ENCODE measurements at regions of chr12 and their contacts with region 1.

Region 1: DNA sequence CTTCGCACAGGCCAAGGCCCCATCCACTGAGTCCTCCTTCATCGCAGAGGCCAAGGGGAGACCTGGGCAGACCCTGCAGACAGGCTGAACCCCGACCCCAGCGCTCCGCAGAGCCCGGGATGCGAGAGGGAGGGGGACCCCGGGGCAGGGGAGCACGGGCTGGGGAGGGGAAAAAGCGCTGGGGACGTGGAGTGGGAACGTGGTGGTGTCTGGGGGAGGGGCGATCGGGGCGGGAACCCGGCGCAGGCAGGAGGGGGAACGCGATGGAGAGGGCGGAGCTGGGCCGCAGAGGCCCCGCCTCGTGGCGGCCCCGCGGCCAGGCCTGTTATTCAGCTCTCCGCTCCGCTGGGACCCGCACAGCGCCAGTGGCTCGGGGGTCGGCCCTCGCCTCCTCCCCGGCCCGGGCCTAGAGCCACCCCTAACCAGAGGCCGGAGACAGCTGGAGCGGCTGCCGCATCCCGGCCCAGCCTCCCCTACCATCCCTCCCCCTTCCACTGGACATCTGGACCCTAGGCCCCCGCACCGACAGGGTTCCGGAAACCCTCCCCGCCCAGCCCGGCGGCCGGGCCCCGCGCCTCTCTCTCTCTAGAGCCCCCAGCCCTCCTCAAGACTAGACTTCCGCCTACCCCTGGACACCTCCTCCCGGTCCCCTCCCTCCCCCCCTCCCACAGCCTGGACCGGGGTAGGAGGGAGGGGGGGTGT is at the start of gene ARHGEF25:
- DNase-seq: no peak
- ATAC-seq: peak; percentile 38
- H3K4me3 Mint-ChIP-seq: peak within 1 kb of the TSS; percentile 75
- H3K27ac Mint-ChIP-seq: no peak within 1 kb of the TSS
- H3K4me1 Mint-ChIP-seq: peaks cover 39% of the 10 kb centered on the region
- H3K27me3 Mint-ChIP-seq: peaks cover 30% of the 10 kb centered on the region
- CTCF ChIP-seq: no peak
- total RNA-seq, gene ARHGEF25: not detected in 2 replicates

Region 2: DNA sequence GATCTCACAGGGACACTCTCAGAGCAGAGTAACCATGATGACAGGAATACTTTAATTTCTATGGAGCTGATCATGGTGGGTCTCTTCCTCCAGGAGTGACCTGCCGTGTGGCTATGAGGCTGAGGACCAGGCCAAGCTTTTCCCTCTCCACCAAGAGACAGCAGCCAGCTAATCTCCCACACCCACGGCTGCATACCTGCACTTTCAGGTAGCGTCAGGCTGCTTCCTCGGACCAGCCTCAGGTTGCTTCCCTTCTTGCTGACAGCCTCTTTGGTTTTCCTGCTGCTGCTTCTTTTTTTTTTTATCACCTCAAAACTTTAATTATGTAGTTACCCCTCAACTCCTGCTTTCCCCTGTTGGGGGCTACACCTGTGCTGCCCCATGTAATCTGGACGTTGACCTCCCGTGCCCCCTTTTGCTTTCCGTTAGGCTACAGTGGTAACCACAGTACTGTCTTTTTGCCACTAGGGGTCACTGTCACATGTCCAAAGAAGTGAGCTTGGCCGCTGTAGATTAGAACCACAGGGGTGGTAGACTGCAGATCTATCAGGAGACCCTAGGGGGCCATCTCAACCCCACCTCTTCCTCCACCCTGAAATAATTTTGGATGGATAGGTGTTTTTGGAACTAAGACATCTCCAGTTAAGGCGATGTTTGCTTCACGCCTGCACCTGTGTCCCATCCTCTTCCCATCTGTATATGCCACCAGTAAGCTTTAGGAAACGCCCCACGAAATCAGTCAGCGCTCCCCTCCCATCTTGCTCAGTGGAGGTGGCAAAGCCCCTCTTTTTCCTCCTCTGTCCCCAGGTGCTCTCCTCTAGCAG is 28.0 kb before region 1 on chr12:
- CTCF ChIA-PET with region 1: interaction called, 19 read pairs
- POLR2A ChIA-PET with region 1: interaction called, 3 read pairs
- intact Hi-C with region 1: no loop called
- DNase-seq: peak; percentile 24
- ATAC-seq: peak; percentile 100
- H3K4me3 Mint-ChIP-seq: no peak overlapping the region
- H3K27ac Mint-ChIP-seq: no peak overlapping the region
- H3K4me1 Mint-ChIP-seq: peaks cover 4% of the 10 kb centered on the region
- H3K27me3 Mint-ChIP-seq: peaks cover 12% of the 10 kb centered on the region
- CTCF ChIP-seq: peak; percentile 85

Region 3: DNA sequence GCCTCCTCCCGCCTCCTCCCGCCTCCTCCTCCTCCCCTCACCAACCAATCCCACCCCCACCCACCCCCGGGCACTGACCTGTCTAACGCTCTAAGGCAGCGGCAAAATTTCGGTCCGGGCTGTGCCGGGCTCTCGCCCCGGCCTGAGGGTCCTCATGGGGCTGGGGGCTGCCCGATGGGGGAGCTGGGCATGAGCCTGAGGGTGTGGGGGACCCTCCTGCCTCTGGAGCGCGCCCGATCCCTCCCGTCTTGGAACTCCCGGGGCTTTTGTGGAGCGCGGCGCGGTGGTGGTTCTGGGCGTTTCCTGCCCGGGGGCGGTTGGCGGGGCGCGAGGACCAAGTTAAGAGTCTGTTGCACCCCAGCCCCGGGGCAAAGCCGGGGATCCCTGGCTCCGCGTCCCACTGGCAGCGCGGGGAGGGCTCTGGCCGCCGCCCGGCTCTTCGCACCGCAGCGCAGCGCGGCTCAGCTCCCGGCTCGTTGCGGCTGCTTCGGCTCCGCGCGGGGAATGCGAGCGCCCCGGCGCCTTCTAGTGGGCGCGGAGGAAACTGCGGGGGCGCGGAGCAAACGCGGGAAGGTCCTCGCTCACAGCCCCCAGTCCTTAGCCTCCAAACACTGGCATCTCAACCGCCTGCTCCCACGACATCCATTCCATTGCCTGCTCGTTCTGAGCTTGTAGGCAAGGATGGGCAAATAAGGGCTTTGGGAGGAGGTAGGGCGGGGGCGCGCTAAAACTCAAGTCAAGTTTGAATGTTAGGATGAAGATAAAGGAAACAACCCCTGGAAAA is 21.6 kb after region 1 on chr12 and contains the start of gene B4GALNT1:
- CTCF ChIA-PET with region 1: interaction called, 3 read pairs
- POLR2A ChIA-PET with region 1: interaction called, 4 read pairs
- intact Hi-C with region 1: loop called (anchors 2 kb)
- DNase-seq: peak; percentile 75
- ATAC-seq: peak; percentile 94
- H3K4me3 Mint-ChIP-seq: peak within 1 kb of the TSS; percentile 73
- H3K27ac Mint-ChIP-seq: no peak within 1 kb of the TSS
- H3K4me1 Mint-ChIP-seq: peaks cover 12% of the 10 kb centered on the region
- H3K27me3 Mint-ChIP-seq: peaks cover 46% of the 10 kb centered on the region
- CTCF ChIP-seq: peak; percentile 27
- total RNA-seq, gene B4GALNT1: 0.31 and 0.51 TPM in 2 replicates

Measured in activated B cell treated with CpG ODN at 0.5 μM for 24 hours (primary cell).